ENCODE measurements at regions of chr15 and their contacts with region 1.

Region 1: GRCh38 chr15:99264125-99264524 is 12.8 kb downstream of the LRRC28 start:
- DNase-seq: no peak
- CTCF ChIP-seq: no peak

Region 2: GRCh38 chr15:98994892-98995291 is 269.2 kb before region 1 on chr15:
- CTCF ChIA-PET with region 1: no interaction called
- POLR2A ChIA-PET with region 1: no interaction called
- DNase-seq: no peak
- CTCF ChIP-seq: no peak

Region 3: GRCh38 chr15:99250494-99251435 is 13.4 kb before region 1 on chr15:
- CTCF ChIA-PET with region 1: interaction called, 12 read pairs
- POLR2A ChIA-PET with region 1: no interaction called
- DNase-seq: peak; percentile 96
- CTCF ChIP-seq: no peak

Region 4: GRCh38 chr15:99603828-99604227 is 339.7 kb after region 1 on chr15:
- CTCF ChIA-PET with region 1: no interaction called
- POLR2A ChIA-PET with region 1: no interaction called
- DNase-seq: no peak
- CTCF ChIP-seq: no peak

Measured in GM10248 (cell line).